Activated naive CD4-positive, alpha-beta T cell treated with anti-CD3 and anti-CD28 coated beads for 36 hours (primary cell): ENCODE measurements at regions of chr21 and their contacts with region 1.

Region 1: GRCh38 chr21:36747815-36748383 is 49.0 kb downstream of the SIM2 start:
- DNase-seq: peak; percentile 57
- H3K4me3 Mint-ChIP-seq: no peak overlapping the region
- H3K27ac Mint-ChIP-seq: no peak overlapping the region
- H3K4me1 Mint-ChIP-seq: peaks cover 10% of the 10 kb centered on the region
- H3K27me3 Mint-ChIP-seq: peaks cover 40% of the 10 kb centered on the region

Region 2: DNA sequence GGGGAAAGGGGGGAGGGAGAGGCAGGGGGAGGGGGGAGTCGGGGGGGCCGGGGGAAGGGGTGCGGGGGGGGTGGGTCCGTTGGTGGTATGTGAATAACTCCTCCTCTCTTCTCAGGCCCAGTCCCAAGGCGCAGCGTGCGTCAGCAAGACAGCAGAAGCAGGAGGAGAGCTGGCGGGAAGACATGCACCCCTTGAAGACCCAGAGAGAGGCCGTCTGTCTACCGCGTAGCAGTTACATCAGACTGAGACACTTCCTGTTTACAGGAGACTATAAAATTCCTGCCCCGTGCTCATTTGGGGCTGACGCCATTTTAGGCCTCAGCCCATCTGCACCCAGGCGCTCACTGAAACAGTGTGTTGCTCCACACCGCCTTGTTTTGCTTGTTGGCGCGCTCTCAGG is 742.9 kb before region 1 on chr21:
- CTCF ChIA-PET with region 1: no interaction called
- intact Hi-C with region 1: no loop called
- DNase-seq: no peak
- H3K4me3 Mint-ChIP-seq: no peak overlapping the region
- H3K27ac Mint-ChIP-seq: no peak overlapping the region
- H3K4me1 Mint-ChIP-seq: no peaks in the 10 kb centered on the region
- H3K27me3 Mint-ChIP-seq: peaks cover 6% of the 10 kb centered on the region

Region 3: GRCh38 chr21:36671836-36672235 is 76.1 kb before region 1 on chr21:
- CTCF ChIA-PET with region 1: no interaction called
- intact Hi-C with region 1: no loop called
- DNase-seq: no peak
- H3K4me3 Mint-ChIP-seq: no peak overlapping the region
- H3K27ac Mint-ChIP-seq: no peak overlapping the region
- H3K4me1 Mint-ChIP-seq: no peaks in the 10 kb centered on the region
- H3K27me3 Mint-ChIP-seq: peaks cover 12% of the 10 kb centered on the region

Region 4: GRCh38 chr21:36835383-36835795 is 87.5 kb after region 1 on chr21:
- CTCF ChIA-PET with region 1: no interaction called
- intact Hi-C with region 1: no loop called
- DNase-seq: no peak
- H3K4me3 Mint-ChIP-seq: no peak overlapping the region
- H3K27ac Mint-ChIP-seq: no peak overlapping the region
- H3K4me1 Mint-ChIP-seq: peaks cover 2% of the 10 kb centered on the region
- H3K27me3 Mint-ChIP-seq: no peaks in the 10 kb centered on the region

Region 5: DNA sequence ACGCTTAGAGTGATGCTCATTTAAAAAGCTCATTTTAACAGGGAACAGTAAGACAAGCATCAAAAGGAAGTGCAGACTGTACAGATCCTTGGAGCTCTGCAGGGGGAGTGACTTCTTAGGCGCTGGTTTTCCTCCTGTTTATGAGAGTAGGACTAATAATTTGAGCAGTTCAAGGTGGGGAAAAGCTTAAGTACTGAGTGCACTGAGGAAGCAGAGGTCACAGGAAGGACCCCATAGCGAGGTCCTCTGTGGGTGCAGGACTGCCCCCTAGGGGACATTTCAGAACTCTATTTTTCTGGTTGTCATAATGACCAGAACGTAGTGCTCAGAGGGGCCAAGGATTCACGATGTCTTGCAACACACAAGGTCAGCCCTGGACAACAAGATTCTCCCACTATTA is 106.5 kb after region 1 on chr21:
- CTCF ChIA-PET with region 1: interaction called, 3 read pairs
- intact Hi-C with region 1: loop called (anchors 5 kb)
- DNase-seq: peak; percentile 26
- H3K4me3 Mint-ChIP-seq: no peak overlapping the region
- H3K27ac Mint-ChIP-seq: no peak overlapping the region
- H3K4me1 Mint-ChIP-seq: peaks cover 8% of the 10 kb centered on the region
- H3K27me3 Mint-ChIP-seq: no peaks in the 10 kb centered on the region